ENCODE measurements at regions of chr4 and their contacts with region 1.

Region 1: GRCh38 chr4:169485791-169486742 is 126.3 kb downstream of the NEK1 start:
- DNase-seq: peak in 1 of 2 donors; percentile 84
- H3K4me3 ChIP-seq: no peak overlapping the region
- H3K27ac ChIP-seq: no peak overlapping the region
- H3K4me1 ChIP-seq: peaks cover 0 to 11% (median 2%) of the 10 kb centered on the region in 4 donors
- H3K27me3 ChIP-seq: no peaks in the 10 kb centered on the region
- CTCF ChIP-seq: peak in 5 of 7 experiments; percentile 10 to 50 (median 24)
- EP300 ChIP-seq: no peak
- POLR2A ChIP-seq: no peak

Region 2: GRCh38 chr4:169010125-169011023 is 475.7 kb before region 1 on chr4 and contains the start of gene CBR4:
- intact Hi-C with region 1: loop called (anchors 10 kb)
- DNase-seq: peak; percentile 98 to 100
- H3K4me3 ChIP-seq: peak within 1 kb of the TSS; percentile 57 to 70 (median 63)
- H3K27ac ChIP-seq: peak within 1 kb of the TSS; percentile 91 to 96 (median 93)
- H3K4me1 ChIP-seq: peaks cover 23 to 55% (median 37%) of the 10 kb centered on the region in 4 donors
- H3K27me3 ChIP-seq: no peaks in the 10 kb centered on the region
- CTCF ChIP-seq: peak in 5 of 7 experiments; percentile 23 to 65 (median 42)
- EP300 ChIP-seq: no peak
- POLR2A ChIP-seq: peak in 2 of 4 donors; percentile 89 to 92
- total RNA-seq, gene CBR4: 13.4 to 48.7 (median 16.4) TPM in 4 of 5 donors, not detected in the other